ENCODE measurements at regions of chr2 and their contacts with region 1.

Region 1: GRCh38 chr2:190578158-190579057 is 43.9 kb upstream of the NEMP2 start:
- DNase-seq: peak; percentile 93
- ATAC-seq: peak; percentile 86
- H3K4me3 ChIP-seq: peak overlapping the region; percentile 31
- H3K27ac ChIP-seq: peak overlapping the region; percentile 97
- H3K4me1 ChIP-seq: peaks cover 39% of the 10 kb centered on the region
- H3K27me3 ChIP-seq: no peaks in the 10 kb centered on the region
- CTCF ChIP-seq: no peak

Region 2: DNA sequence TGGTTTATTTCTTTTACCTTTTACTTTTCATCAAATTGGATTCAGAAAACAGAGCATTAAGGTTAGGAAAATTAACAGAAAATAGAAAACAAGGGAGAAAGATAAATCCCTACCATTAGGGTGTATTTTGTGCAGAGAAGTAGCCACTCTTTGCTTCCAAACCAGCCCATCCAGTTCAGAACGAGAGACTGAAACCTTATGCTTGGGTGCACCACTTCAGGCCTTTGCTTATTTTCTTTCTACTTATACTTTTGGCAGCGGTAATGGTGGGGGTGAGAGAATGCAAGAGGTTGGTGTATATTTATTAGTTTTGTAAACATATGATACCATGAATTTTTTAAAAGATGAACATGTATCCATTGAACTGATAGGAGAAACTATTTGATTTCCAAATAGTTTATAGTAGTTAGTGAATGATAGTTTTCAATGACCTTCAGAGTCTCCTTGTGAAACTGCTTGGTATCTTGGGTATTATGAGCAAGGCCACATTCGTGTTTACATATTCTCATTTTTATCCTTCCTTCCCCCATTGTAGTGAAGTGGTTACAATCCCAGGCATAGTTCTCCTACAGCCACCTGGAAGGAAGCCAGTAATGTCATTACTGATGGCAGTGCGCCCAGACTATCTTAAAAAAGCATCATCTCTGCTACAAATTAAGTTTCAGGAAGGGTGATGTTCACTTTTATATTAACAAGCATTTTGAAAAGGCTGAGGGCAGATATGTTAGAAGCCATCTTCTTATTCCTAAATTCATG is 109.4 kb before region 1 on chr2:
- CTCF ChIA-PET with region 1: no interaction called
- POLR2A ChIA-PET with region 1: no interaction called
- intact Hi-C with region 1: loop called (anchors 2 kb)
- DNase-seq: peak; percentile 98
- ATAC-seq: peak; percentile 81
- H3K4me3 ChIP-seq: no peak overlapping the region
- H3K27ac ChIP-seq: peak overlapping the region; percentile 89
- H3K4me1 ChIP-seq: peaks cover 40% of the 10 kb centered on the region
- H3K27me3 ChIP-seq: no peaks in the 10 kb centered on the region
- CTCF ChIP-seq: no peak

Region 3: DNA sequence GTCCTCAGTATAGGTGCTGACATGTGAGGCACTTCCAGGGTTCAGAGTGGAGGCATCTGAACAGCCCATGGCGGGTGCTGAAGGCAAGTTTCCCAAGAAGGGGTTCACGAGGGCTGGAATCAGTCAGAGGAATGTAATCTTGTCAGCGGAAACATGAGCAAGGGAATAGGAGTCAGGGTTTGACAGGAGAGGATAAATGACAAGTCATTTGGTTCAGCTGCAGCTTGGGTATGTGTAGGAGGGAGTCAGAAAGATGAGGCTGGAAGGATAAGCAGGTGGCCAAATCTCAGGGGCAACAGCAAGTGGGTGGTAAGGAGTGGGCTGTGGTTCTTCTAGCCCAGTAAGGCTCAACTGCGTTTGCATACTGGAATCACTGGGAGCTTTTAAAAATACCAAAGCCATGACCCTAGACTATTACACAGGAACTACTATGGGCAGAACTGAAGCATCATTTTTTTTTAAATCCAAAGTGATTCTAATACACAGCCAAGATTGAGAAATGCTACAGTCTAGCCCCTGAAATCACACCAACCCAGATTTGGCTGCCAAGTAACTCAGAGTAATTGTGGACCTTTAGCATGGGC is 28.7 kb after region 1 on chr2:
- CTCF ChIA-PET with region 1: no interaction called
- POLR2A ChIA-PET with region 1: no interaction called
- intact Hi-C with region 1: loop called (anchors 2 kb)
- DNase-seq: peak; percentile 60
- ATAC-seq: peak; percentile 70
- H3K4me3 ChIP-seq: peak overlapping the region; percentile 56; the same call in 1 of the 2 replicates
- H3K27ac ChIP-seq: peak overlapping the region; percentile 93
- H3K4me1 ChIP-seq: peaks cover 20% of the 10 kb centered on the region
- H3K27me3 ChIP-seq: no peaks in the 10 kb centered on the region
- CTCF ChIP-seq: no peak

Measured in PC-3 (cell line).